ENCODE measurements at regions of chr19 and their contacts with region 1.

Region 1: GRCh38 chr19:18379803-18380747 is 5.9 kb upstream of the GDF15 start:
- DNase-seq: peak; percentile 98
- ATAC-seq: peak; percentile 90
- H3K4me3 ChIP-seq: no peak overlapping the region; a peak in 1 of 6 replicates
- H3K27ac ChIP-seq: peak overlapping the region; percentile 80
- H3K4me1 ChIP-seq: peaks cover 96% of the 10 kb centered on the region
- H3K27me3 ChIP-seq: no peaks in the 10 kb centered on the region; a peak in 1 of 5 replicates
- CTCF ChIP-seq: 0 out of 2 replicates have a peak, but pooled peaks have one; percentile 31
- EP300 ChIP-seq: peak; percentile 15 to 97; a peak in 2 of 4 replicates
- POLR2A ChIP-seq: peak in 1 of 2 experiments; percentile 15; a peak in 1 of 4 replicates
- RAD21 ChIP-seq: no peak

Region 2: DNA sequence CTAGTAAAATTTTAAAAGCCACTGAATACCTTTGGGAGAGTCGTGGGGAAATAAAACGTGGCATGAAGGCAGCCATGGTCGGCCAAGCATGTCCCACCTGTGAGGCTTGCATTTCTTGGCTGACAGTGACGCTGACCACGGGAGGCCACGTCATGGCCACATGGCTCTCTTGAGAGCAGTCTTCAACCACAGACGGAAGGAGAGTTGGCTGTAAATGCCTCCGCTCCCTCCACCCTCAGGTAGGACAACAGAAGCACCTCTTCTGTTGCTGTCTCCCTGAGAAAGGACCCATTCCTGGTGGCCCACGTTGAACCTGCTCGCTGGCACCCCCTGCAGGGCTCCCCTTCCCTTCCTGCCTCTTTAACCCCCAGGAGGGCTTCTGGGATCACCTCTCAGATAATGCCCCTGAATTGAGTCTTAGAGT is 28.0 kb after region 1 on chr19:
- CTCF ChIA-PET with region 1: no interaction called
- POLR2A ChIA-PET with region 1: no interaction called
- in situ Hi-C with region 1: no loop called
- intact Hi-C with region 1: no loop called
- DNase-seq: no peak
- ATAC-seq: peak; percentile 62
- H3K4me3 ChIP-seq: no peak overlapping the region
- H3K27ac ChIP-seq: no peak overlapping the region
- H3K4me1 ChIP-seq: peaks cover 38% of the 10 kb centered on the region
- H3K27me3 ChIP-seq: no peaks in the 10 kb centered on the region
- CTCF ChIP-seq: peak; percentile 77
- EP300 ChIP-seq: no peak
- POLR2A ChIP-seq: no peak
- RAD21 ChIP-seq: peak; percentile 61; the same call in 1 of the 2 replicates

Region 3: GRCh38 chr19:18419195-18419698 is 39.2 kb after region 1 on chr19 and contains the start of gene SSBP4:
- CTCF ChIA-PET with region 1: no interaction called
- POLR2A ChIA-PET with region 1: interaction called, 10 read pairs
- in situ Hi-C with region 1: no loop called
- intact Hi-C with region 1: no loop called
- DNase-seq: peak; percentile 66
- ATAC-seq: peak; percentile 23
- H3K4me3 ChIP-seq: peak within 1 kb of the TSS; percentile 60 to 78 (median 76); a peak in 5 of 6 replicates
- H3K27ac ChIP-seq: peak within 1 kb of the TSS; percentile 64
- H3K4me1 ChIP-seq: peaks cover 65% of the 10 kb centered on the region
- H3K27me3 ChIP-seq: no peaks in the 10 kb centered on the region
- CTCF ChIP-seq: peak; percentile 34; the same call in 1 of the 2 replicates
- EP300 ChIP-seq: peak in 1 of 2 experiments; percentile 87; a peak in 2 of 4 replicates
- POLR2A ChIP-seq: no peak
- RAD21 ChIP-seq: peak; percentile 88
- total RNA-seq, gene SSBP4: 19.3 and 39.5 TPM in 2 replicates

Region 4: GRCh38 chr19:18496167-18496979 is 116.3 kb after region 1 on chr19:
- CTCF ChIA-PET with region 1: no interaction called
- POLR2A ChIA-PET with region 1: no interaction called
- in situ Hi-C with region 1: no loop called
- intact Hi-C with region 1: no loop called
- DNase-seq: peak; percentile 32
- ATAC-seq: peak; percentile 56
- H3K4me3 ChIP-seq: no peak overlapping the region
- H3K27ac ChIP-seq: no peak overlapping the region
- H3K4me1 ChIP-seq: peaks cover 57% of the 10 kb centered on the region
- H3K27me3 ChIP-seq: no peaks in the 10 kb centered on the region
- CTCF ChIP-seq: peak; percentile 76
- EP300 ChIP-seq: no peak
- POLR2A ChIP-seq: no peak
- RAD21 ChIP-seq: peak; percentile 37; the same call in 1 of the 2 replicates

Measured in HepG2 (cell line).